ENCODE measurements at regions of chr1 and their contacts with region 1.

Region 1: DNA sequence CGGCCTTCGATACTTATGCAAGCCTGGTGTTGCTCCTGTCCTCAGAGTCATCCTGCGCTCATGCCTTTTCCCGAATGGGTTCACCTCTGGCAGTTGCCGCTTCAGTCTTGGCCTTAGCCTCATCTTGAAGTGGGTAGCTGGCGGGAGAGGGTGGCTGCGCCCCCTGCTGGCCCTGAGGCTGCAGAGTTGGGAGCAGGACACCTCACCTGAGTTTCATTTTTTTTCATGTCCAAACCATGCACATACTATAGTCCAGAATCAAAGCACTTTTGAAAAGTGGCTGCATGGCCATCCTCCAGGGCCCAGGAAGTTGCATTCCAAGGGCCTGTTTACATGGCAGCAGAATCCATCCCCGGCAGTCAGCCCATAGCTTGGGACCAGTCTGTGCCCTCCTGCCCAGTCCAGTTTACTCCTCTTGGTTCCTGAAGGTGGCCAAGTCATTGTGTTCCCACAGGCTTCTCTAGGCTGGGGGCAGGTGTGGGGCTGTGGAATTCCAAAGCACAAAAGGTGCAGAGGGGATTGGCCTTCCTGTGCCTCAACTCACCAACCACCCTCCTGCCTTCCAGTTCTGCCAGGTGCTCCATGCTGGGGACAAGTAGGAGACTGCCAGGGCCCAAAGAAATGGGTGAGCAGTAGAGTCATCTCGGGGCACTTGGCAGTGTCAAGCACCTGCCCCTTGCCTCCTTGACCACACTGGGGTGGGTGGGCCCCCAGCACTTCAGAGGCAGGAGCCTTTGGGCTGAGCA is 44.0 kb downstream of the YARS1 start:
- DNase-seq: peak; percentile 53
- ATAC-seq: peak; percentile 79
- H3K4me3 ChIP-seq: no peak overlapping the region
- H3K27ac ChIP-seq: no peak overlapping the region
- H3K4me1 ChIP-seq: no peaks in the 10 kb centered on the region
- H3K27me3 ChIP-seq: no peaks in the 10 kb centered on the region
- CTCF ChIP-seq: peak; percentile 94
- EP300 ChIP-seq: no peak
- POLR2A ChIP-seq: no peak; a peak in 1 of 4 replicates
- RAD21 ChIP-seq: peak; percentile 93

Region 2: DNA sequence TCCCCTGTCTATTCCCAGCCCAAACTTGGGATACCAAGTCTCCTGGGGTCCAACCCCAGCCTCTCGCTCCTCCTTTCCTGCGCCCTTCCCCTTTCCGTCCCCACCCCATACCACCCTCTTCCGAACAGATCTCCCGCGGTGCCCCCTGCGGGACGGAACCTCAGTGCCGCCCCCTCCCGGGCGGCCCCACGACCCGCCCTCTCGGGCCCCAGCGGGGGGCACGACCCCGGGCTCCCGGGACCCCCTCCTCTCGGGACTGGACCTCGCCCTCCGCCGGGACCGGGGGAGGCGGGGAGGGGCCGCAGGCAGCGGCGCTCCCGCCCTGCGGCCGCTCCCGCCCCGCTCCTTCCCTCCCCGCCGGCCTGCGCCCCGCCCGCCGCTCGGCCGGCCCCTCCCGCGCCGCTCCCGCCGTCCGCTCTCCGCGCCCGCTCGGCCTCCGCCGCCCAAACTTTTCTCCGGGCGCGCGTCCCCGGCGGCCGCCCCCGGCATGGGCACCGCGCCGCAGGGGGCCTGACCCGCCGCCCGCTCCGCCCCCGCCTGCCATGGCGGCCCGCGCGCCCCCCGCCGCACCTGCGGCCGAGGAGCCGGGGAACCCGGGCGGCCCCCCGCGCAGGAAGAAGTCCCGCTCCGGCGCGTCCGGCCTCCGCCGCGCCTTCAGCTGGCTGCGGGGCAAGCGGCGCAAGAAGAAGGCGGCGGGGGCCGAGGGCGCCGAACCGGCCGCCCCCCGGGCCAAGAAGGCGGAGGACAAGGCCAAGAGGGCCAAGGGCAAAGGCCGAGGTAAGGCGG is 31.6 kb before region 1 on chr1:
- CTCF ChIA-PET with region 1: interaction called, 13 read pairs
- POLR2A ChIA-PET with region 1: interaction called, 16 read pairs
- in situ Hi-C with region 1: no loop called
- intact Hi-C with region 1: loop called (anchors 2 kb)
- DNase-seq: no peak
- ATAC-seq: peak; percentile 20
- H3K4me3 ChIP-seq: peak overlapping the region; percentile 80 to 92 (median 91)
- H3K27ac ChIP-seq: peak overlapping the region; percentile 87
- H3K4me1 ChIP-seq: peaks cover 62% of the 10 kb centered on the region
- H3K27me3 ChIP-seq: no peaks in the 10 kb centered on the region; a peak in 1 of 5 replicates
- CTCF ChIP-seq: peak; percentile 65
- EP300 ChIP-seq: no peak
- POLR2A ChIP-seq: no peak
- RAD21 ChIP-seq: peak; percentile 82

Region 3: DNA sequence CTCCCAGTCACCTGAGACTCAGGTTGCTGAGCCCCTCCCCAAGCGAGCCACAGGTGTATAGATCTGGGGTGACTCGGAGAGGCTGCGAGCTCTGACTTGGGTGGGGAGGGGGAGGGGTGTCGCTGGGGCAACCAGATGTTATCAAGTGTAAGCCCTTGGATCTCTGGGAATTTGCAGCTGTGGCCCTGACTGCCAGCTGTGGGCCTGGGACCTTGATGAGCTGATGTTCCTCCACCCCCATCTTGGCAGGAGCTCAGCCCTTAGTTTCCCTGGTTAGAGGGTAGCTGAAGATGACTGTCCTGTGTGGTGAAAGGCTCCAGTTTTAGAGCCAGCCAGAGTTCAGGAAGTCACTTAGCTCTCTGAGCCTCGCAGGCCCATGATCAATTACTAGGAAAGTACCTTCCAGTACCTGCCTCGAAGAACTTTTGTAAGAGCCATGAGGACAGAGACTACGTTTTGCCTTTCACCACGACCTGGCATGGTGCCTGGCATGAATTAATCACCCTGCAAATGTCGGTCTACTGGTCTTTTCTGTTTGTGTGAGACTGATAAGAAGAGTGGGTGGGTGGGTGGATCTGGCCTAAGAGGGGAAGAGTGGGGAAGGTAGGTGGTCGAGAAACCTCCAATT is 11.8 kb before region 1 on chr1:
- CTCF ChIA-PET with region 1: no interaction called
- POLR2A ChIA-PET with region 1: interaction called, 12 read pairs
- in situ Hi-C with region 1: no loop called
- intact Hi-C with region 1: no loop called
- DNase-seq: no peak
- ATAC-seq: no peak
- H3K4me3 ChIP-seq: no peak overlapping the region
- H3K27ac ChIP-seq: peak overlapping the region; percentile 92
- H3K4me1 ChIP-seq: peaks cover 62% of the 10 kb centered on the region
- H3K27me3 ChIP-seq: no peaks in the 10 kb centered on the region
- CTCF ChIP-seq: no peak
- EP300 ChIP-seq: no peak
- POLR2A ChIP-seq: no peak
- RAD21 ChIP-seq: no peak

Measured in HepG2 (cell line).